Activated CD4-positive, alpha-beta T cell treated with anti-CD3 and anti-CD28 coated beads for 36 hours (primary cell): ENCODE measurements at regions of chr1 and their contacts with region 1.

Region 1: GRCh38 chr1:91997607-91998195 is 32.1 kb upstream of the EPHX4 start:
- DNase-seq: peak; percentile 64
- ATAC-seq: no peak
- H3K4me3 Mint-ChIP-seq: no peak overlapping the region
- H3K27ac Mint-ChIP-seq: no peak overlapping the region
- H3K4me1 Mint-ChIP-seq: no peaks in the 10 kb centered on the region
- H3K27me3 Mint-ChIP-seq: no peaks in the 10 kb centered on the region

Region 2: DNA sequence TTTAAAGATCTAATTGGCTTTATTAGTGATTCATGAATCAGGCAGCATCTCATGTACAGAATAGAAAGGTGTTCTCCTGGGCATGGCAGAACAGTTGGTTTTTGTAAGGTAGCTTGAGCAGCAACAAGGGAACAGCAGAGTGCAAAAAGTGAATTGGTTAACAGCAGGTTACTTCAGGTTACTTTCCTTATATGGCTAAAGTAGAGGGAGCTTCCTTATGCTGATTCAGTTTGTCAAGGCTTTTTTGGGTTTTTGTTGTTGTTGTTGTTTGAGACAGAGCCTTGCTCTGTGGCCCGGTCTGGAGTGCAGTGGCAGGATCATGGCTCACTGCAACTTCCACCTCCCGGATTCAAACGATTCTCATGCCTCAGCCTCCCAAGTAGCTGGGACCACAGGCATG is 364.3 kb before region 1 on chr1:
- CTCF ChIA-PET with region 1: no interaction called
- POLR2A ChIA-PET with region 1: no interaction called
- intact Hi-C with region 1: no loop called
- DNase-seq: no peak
- ATAC-seq: no peak
- H3K4me3 Mint-ChIP-seq: no peak overlapping the region
- H3K27ac Mint-ChIP-seq: no peak overlapping the region
- H3K4me1 Mint-ChIP-seq: peaks cover 5% of the 10 kb centered on the region
- H3K27me3 Mint-ChIP-seq: no peaks in the 10 kb centered on the region

Region 3: DNA sequence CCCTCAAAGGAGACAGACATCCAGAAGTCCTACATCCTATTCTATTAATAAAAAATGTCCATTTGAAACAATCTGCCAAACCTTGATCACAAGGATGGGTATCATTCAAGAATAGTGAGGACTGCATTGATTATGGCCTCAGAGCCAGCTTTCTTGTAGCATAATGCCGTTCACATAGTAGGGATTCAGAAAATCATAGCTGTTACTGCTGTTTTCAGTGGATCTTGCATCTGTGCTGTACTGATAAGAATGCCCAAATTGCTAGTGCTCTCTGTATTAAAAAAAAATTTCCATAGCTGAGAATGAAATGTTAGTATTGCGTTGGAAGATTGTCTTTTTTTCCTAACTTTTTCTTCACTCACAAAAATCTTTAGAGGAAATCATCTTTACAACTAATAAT is 29.4 kb before region 1 on chr1:
- CTCF ChIA-PET with region 1: no interaction called
- POLR2A ChIA-PET with region 1: no interaction called
- intact Hi-C with region 1: no loop called
- DNase-seq: no peak
- ATAC-seq: no peak
- H3K4me3 Mint-ChIP-seq: no peak overlapping the region
- H3K27ac Mint-ChIP-seq: no peak overlapping the region
- H3K4me1 Mint-ChIP-seq: no peaks in the 10 kb centered on the region
- H3K27me3 Mint-ChIP-seq: no peaks in the 10 kb centered on the region

Region 4: DNA sequence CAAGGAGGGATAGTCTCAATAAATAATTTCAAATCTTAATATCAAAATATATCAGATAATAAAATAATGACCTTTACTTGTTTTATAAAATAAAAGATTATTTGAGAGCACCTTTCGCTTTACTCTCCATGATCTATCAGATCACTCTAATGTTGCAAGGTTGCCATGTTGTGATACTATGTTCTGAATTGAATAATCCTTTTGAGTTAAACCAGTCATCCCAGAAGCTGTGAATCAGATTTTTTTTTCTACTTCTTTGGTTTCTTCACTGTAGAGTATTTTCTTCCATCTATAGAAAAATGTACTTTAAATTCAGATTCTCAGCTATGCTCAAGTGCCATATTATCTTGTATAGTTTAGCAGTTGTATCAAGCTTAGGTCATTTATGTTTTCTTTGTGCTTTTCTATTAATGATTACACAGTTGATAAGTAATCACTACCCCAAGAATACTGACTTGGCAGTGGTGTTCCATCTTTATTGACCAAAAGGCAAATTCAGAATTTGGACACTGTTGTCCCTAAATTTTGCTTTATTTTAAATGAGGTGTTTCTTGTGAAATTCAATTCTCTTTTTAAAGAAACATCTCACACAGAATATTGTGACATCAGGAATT is 15.6 kb before region 1 on chr1:
- CTCF ChIA-PET with region 1: interaction called, 10 read pairs
- POLR2A ChIA-PET with region 1: no interaction called
- intact Hi-C with region 1: no loop called
- DNase-seq: no peak
- ATAC-seq: peak; percentile 55
- H3K4me3 Mint-ChIP-seq: no peak overlapping the region
- H3K27ac Mint-ChIP-seq: no peak overlapping the region
- H3K4me1 Mint-ChIP-seq: no peaks in the 10 kb centered on the region
- H3K27me3 Mint-ChIP-seq: no peaks in the 10 kb centered on the region

Region 5: GRCh38 chr1:92291372-92291999 is 293.8 kb after region 1 on chr1:
- CTCF ChIA-PET with region 1: interaction called, 25 read pairs
- POLR2A ChIA-PET with region 1: interaction called, 3 read pairs
- intact Hi-C with region 1: loop called (anchors 1 kb)
- DNase-seq: no peak
- ATAC-seq: no peak
- H3K4me3 Mint-ChIP-seq: no peak overlapping the region
- H3K27ac Mint-ChIP-seq: no peak overlapping the region
- H3K4me1 Mint-ChIP-seq: peaks cover 17% of the 10 kb centered on the region
- H3K27me3 Mint-ChIP-seq: no peaks in the 10 kb centered on the region

Region 6: GRCh38 chr1:92310185-92310597 is 312.5 kb after region 1 on chr1:
- CTCF ChIA-PET with region 1: interaction called, 12 read pairs
- POLR2A ChIA-PET with region 1: no interaction called
- intact Hi-C with region 1: no loop called
- DNase-seq: no peak
- ATAC-seq: peak; percentile 34
- H3K4me3 Mint-ChIP-seq: no peak overlapping the region
- H3K27ac Mint-ChIP-seq: no peak overlapping the region
- H3K4me1 Mint-ChIP-seq: peaks cover 33% of the 10 kb centered on the region
- H3K27me3 Mint-ChIP-seq: no peaks in the 10 kb centered on the region

Region 7: DNA sequence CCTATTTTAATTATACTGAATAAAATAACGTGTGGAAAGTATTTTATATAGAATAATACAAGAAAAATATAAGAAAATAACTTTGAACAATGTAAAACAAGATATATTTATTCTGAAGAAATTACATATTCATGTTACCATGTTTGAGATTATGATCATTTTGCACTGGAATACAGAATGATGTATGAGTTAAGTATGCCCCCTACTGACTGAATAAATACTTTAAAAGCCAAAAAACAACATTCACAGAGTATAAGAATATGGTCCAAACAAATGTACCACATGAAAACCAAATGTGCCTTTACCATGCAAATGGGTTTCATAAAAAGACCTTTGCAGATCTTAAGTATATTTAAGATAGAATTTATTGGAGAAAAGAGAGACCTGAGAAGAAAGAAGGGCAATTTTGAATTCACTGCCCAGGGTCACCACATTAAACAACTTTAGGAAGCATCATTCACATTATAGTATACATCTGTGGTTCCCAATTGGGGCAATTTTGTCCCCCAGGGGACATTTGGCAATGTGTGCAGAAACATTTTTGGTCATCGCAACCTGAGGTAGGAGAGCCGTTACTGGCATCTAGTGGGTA is 625.6 kb after region 1 on chr1:
- CTCF ChIA-PET with region 1: interaction called, 6 read pairs
- POLR2A ChIA-PET with region 1: no interaction called
- intact Hi-C with region 1: loop called (anchors 1 kb)
- DNase-seq: no peak
- ATAC-seq: peak; percentile 57
- H3K4me3 Mint-ChIP-seq: no peak overlapping the region
- H3K27ac Mint-ChIP-seq: no peak overlapping the region
- H3K4me1 Mint-ChIP-seq: peaks cover 14% of the 10 kb centered on the region
- H3K27me3 Mint-ChIP-seq: no peaks in the 10 kb centered on the region

Region 8: DNA sequence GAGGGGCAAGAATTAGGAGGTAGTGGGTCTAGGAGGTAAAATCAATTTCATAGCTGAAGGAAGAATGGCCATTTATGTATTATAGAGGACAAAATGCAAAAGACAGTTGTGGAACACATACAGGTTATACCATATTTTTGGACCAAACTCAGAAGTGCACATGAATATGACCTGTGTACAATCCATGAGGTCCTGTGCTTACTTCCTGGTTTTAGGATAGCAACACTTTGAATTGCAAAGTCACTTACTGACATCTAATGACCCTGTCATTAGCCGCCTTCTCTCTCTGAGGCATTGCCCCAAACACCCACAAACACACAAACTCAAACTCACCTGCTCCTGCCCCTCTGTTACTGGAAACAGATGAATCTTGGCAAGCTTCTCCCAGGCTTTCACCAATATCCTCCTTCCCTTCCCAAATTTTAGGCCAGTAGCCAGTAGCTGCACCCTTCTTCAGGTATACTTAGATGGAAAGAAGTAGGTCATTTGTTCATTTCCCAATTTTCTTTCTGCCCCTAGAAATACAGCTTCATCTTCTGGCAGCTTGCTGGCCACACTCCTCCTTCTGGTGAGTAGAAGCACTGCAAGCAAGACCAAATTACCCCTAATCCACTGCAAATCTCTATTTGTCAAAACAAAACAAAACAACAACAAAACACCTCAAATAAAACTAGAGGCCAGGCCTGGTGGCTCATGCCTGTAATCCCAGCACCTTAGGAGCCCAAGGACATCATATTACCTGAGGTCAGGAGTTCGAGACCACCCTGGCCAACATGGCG is 820.5 kb after region 1 on chr1:
- CTCF ChIA-PET with region 1: interaction called, 4 read pairs
- POLR2A ChIA-PET with region 1: no interaction called
- intact Hi-C with region 1: loop called (anchors 5 kb)
- DNase-seq: peak; percentile 33
- ATAC-seq: no peak
- H3K4me3 Mint-ChIP-seq: no peak overlapping the region
- H3K27ac Mint-ChIP-seq: no peak overlapping the region
- H3K4me1 Mint-ChIP-seq: no peaks in the 10 kb centered on the region
- H3K27me3 Mint-ChIP-seq: peaks cover 9% of the 10 kb centered on the region